CD4-positive, alpha-beta T cell (primary cell): ENCODE measurements at regions of chr7 and their contacts with region 1.

Region 1: DNA sequence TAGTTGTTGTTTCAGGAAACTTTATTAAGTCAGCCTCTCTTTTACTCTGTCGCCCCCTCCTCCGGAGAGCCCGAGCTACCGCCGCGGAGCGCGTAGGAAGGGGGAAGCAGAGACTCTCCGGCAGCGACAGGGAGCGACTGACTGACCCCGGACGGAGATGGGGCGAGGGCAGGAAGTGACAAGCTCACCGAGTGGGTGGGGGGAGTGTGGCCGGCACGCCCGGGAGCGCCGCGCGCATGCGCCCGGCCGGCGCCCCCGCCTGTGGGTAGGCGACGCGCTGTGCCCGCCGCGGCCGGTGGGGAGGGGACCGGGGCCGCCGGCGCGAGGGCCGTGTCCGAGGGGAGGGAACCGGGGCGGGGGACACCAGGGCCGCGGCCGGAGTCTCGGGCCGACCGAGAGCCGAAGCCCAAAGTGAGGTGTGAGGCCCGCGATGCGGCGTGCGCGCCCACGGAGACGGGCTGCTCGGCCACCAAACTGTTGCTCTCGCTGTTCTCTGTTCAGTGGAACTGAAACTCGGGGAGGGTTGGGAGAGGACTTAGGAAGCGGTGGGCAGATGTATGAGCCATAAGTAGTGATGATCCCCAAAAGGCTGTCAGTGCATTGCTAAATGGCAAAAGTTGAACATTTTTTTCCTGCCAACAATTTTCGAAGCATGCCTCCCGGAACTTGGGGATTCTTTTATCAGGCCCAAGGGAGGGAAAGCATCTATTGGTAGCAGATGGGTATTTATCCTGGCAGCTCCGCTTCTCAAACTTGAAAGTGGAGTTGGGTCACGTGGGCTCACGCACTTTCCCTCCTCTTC is at the start of gene ZNF800:
- DNase-seq: peak; percentile 72 to 95 (median 85)
- ATAC-seq: peak; percentile 72
- H3K4me3 ChIP-seq: peak within 1 kb of the TSS; percentile 92
- H3K4me3 Mint-ChIP-seq: peak within 1 kb of the TSS; percentile 99
- H3K27ac ChIP-seq: peak within 1 kb of the TSS; percentile 95
- H3K27ac Mint-ChIP-seq: peak within 1 kb of the TSS; percentile 94
- H3K4me1 ChIP-seq: peaks cover 16% of the 10 kb centered on the region
- H3K4me1 Mint-ChIP-seq: peaks cover 65% of the 10 kb centered on the region
- H3K27me3 ChIP-seq: no peaks in the 10 kb centered on the region
- H3K27me3 Mint-ChIP-seq: no peaks in the 10 kb centered on the region
- CTCF ChIP-seq: no peak
- total RNA-seq, gene ZNF800: 73.9 to 78.9 TPM

Region 2: GRCh38 chr7:126079581-126079980 is 1313.2 kb before region 1 on chr7:
- CTCF ChIA-PET with region 1: no interaction called
- POLR2A ChIA-PET with region 1: no interaction called
- intact Hi-C with region 1: no loop called
- DNase-seq: no peak
- ATAC-seq: no peak
- H3K4me3 ChIP-seq: no peak overlapping the region
- H3K4me3 Mint-ChIP-seq: no peak overlapping the region
- H3K27ac ChIP-seq: no peak overlapping the region
- H3K27ac Mint-ChIP-seq: no peak overlapping the region
- H3K4me1 ChIP-seq: no peaks in the 10 kb centered on the region
- H3K4me1 Mint-ChIP-seq: no peaks in the 10 kb centered on the region
- H3K27me3 ChIP-seq: no peaks in the 10 kb centered on the region
- H3K27me3 Mint-ChIP-seq: no peaks in the 10 kb centered on the region
- CTCF ChIP-seq: no peak

Region 3: GRCh38 chr7:127091620-127092019 is 301.1 kb before region 1 on chr7:
- CTCF ChIA-PET with region 1: no interaction called
- POLR2A ChIA-PET with region 1: no interaction called
- intact Hi-C with region 1: no loop called
- DNase-seq: peak in 1 of 14 experiments; percentile 4
- ATAC-seq: no peak
- H3K4me3 ChIP-seq: no peak overlapping the region
- H3K4me3 Mint-ChIP-seq: no peak overlapping the region
- H3K27ac ChIP-seq: no peak overlapping the region
- H3K27ac Mint-ChIP-seq: no peak overlapping the region
- H3K4me1 ChIP-seq: no peaks in the 10 kb centered on the region
- H3K4me1 Mint-ChIP-seq: no peaks in the 10 kb centered on the region
- H3K27me3 ChIP-seq: no peaks in the 10 kb centered on the region
- H3K27me3 Mint-ChIP-seq: peaks cover 21% of the 10 kb centered on the region
- CTCF ChIP-seq: no peak

Region 4: DNA sequence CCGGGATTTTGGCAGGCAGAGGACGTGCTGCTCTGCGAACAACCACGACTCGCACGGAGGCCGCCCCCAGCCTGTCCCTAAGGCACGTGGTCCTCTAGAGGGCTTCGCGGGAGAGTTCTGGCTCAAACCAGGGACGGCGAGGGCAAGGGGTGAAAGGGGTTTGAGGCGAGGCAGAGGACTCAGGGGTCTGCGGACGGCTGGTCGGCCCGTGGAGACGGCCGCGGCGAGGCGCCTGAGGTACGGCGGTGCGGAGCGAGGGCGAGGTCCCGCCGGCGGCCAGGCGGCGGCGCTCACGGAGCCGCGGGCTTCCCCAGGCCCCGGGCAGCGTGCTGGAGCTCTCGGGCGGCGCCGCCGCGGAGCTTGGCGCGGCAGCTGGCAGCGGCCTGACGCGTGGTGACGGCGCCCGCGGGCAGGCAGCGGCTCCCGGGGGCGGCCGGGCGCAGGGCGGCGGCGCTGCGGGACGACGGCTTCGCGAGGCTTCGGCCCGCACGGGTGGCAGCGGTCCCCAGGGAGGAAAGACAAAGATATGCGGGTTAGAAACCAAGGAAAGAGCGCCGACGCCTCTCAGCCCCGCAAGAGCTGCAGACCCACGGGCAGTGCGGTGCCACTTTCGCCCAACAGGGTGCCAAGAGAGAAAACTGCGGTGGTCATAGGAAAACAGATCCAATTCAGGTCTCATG is 45.1 kb before region 1 on chr7:
- CTCF ChIA-PET with region 1: interaction called, 12 read pairs
- POLR2A ChIA-PET with region 1: interaction called, 42 read pairs
- intact Hi-C with region 1: loop called (anchors 5 kb)
- DNase-seq: peak; percentile 48 to 90 (median 68)
- ATAC-seq: peak; percentile 99
- H3K4me3 ChIP-seq: peak overlapping the region; percentile 38
- H3K4me3 Mint-ChIP-seq: peak overlapping the region; percentile 36
- H3K27ac ChIP-seq: no peak overlapping the region
- H3K27ac Mint-ChIP-seq: no peak overlapping the region
- H3K4me1 ChIP-seq: peaks cover 7% of the 10 kb centered on the region
- H3K4me1 Mint-ChIP-seq: peaks cover 36% of the 10 kb centered on the region
- H3K27me3 ChIP-seq: no peaks in the 10 kb centered on the region
- H3K27me3 Mint-ChIP-seq: no peaks in the 10 kb centered on the region
- CTCF ChIP-seq: peak; percentile 42

Region 5: GRCh38 chr7:127375631-127376030 is 17.1 kb before region 1 on chr7:
- CTCF ChIA-PET with region 1: interaction called, 5 read pairs
- POLR2A ChIA-PET with region 1: interaction called, 33 read pairs
- intact Hi-C with region 1: loop called in 1 of 2 experiments (anchors 2 kb)
- DNase-seq: no peak
- ATAC-seq: no peak
- H3K4me3 ChIP-seq: no peak overlapping the region
- H3K4me3 Mint-ChIP-seq: no peak overlapping the region
- H3K27ac ChIP-seq: no peak overlapping the region
- H3K27ac Mint-ChIP-seq: no peak overlapping the region
- H3K4me1 ChIP-seq: no peaks in the 10 kb centered on the region
- H3K4me1 Mint-ChIP-seq: peaks cover 69% of the 10 kb centered on the region
- H3K27me3 ChIP-seq: no peaks in the 10 kb centered on the region
- H3K27me3 Mint-ChIP-seq: no peaks in the 10 kb centered on the region
- CTCF ChIP-seq: no peak

Region 6: DNA sequence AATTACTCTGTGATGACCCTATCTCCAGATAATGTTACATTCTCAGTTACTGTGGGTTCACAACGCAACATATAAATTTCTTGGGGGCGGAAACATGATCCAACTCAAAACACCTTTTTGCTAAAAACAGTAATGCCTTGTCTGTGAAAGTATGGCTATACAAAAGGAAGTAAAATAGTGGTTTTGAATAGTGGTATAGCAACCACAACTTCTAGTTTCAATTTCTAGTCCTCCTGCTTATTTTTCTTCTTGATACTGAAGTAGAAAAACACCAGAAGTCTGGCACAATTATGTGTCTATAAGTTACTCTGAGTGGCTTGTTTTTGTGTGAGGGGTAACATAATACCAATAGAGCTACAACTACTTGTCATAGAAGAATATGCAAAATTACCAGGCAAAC is 21.2 kb after region 1 on chr7:
- CTCF ChIA-PET with region 1: no interaction called
- POLR2A ChIA-PET with region 1: interaction called, 76 read pairs
- intact Hi-C with region 1: no loop called
- DNase-seq: peak in 3 of 14 experiments; percentile 54 to 80 (median 55)
- ATAC-seq: peak; percentile 82
- H3K4me3 ChIP-seq: peak overlapping the region; percentile 4
- H3K4me3 Mint-ChIP-seq: peak overlapping the region; percentile 58
- H3K27ac ChIP-seq: peak overlapping the region; percentile 71 to 74
- H3K27ac Mint-ChIP-seq: peak overlapping the region; percentile 93
- H3K4me1 ChIP-seq: peaks cover 23% of the 10 kb centered on the region
- H3K4me1 Mint-ChIP-seq: peaks cover 65% of the 10 kb centered on the region
- H3K27me3 ChIP-seq: no peaks in the 10 kb centered on the region
- H3K27me3 Mint-ChIP-seq: no peaks in the 10 kb centered on the region
- CTCF ChIP-seq: no peak

Region 7: GRCh38 chr7:127478024-127478355 is 85.2 kb after region 1 on chr7:
- CTCF ChIA-PET with region 1: no interaction called
- POLR2A ChIA-PET with region 1: interaction called, 17 read pairs
- intact Hi-C with region 1: no loop called
- DNase-seq: peak in 3 of 14 experiments; percentile 9 to 32 (median 29)
- ATAC-seq: peak; percentile 69
- H3K4me3 ChIP-seq: no peak overlapping the region
- H3K4me3 Mint-ChIP-seq: peak overlapping the region; percentile 3
- H3K27ac ChIP-seq: no peak overlapping the region
- H3K27ac Mint-ChIP-seq: peak overlapping the region; percentile 61
- H3K4me1 ChIP-seq: no peaks in the 10 kb centered on the region
- H3K4me1 Mint-ChIP-seq: peaks cover 32% of the 10 kb centered on the region
- H3K27me3 ChIP-seq: peaks cover 4 to 5% of the 10 kb centered on the region in 2 experiments
- H3K27me3 Mint-ChIP-seq: peaks cover 5% of the 10 kb centered on the region
- CTCF ChIP-seq: peak; percentile 25

Region 8: DNA sequence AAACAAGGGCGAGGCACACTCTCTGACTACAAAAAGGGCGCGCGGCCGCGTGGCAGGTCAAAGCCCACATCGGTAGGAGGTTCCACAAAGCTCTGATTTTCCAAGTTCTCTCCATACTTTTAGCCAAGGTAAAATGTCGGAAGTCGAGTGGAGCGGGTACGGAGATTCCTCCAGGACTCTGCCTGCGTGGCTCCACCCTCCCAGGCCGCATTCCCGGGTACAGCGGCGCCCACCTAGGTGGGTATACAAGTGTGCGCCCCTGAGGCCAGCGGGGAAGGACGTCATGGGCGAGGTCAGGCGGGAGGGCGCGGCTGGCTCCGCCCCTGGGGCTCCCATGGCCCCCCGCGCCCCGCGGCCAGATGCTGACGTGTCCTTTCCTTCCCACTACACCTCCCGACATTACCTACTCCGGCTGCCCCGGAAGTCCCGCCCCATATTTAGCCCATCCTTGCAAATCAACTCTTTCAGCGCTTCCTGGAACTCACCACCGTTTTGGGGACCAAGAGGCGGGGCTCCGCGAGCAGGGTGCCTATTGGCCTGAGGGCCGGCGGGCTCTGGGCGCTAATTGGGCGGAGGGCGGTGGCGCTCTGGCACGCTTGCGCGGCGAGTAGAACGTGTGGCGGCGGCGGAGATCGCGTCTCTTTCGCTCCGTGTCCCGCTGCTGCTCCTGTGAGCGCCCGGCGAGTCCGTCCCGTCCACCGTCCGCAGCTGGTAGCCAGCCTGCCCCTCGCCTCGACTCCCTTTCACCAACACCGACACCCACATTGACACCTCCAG is 259.0 kb after region 1 on chr7 and contains the start of gene SND1:
- CTCF ChIA-PET with region 1: no interaction called
- POLR2A ChIA-PET with region 1: interaction called, 6 read pairs
- intact Hi-C with region 1: loop called (anchors 5 to 10 kb)
- DNase-seq: peak; percentile 95 to 100 (median 98)
- ATAC-seq: peak; percentile 93
- H3K4me3 ChIP-seq: peak within 1 kb of the TSS; percentile 99
- H3K4me3 Mint-ChIP-seq: peak within 1 kb of the TSS; percentile 93
- H3K27ac ChIP-seq: peak within 1 kb of the TSS; percentile 89 to 94
- H3K27ac Mint-ChIP-seq: no peak within 1 kb of the TSS
- H3K4me1 ChIP-seq: peaks cover 43% of the 10 kb centered on the region
- H3K4me1 Mint-ChIP-seq: peaks cover 55% of the 10 kb centered on the region
- H3K27me3 ChIP-seq: no peaks in the 10 kb centered on the region
- H3K27me3 Mint-ChIP-seq: no peaks in the 10 kb centered on the region
- CTCF ChIP-seq: no peak
- total RNA-seq, gene SND1: 104 to 113 TPM